ENCODE measurements at regions of chr10 and their contacts with region 1.

Region 1: DNA sequence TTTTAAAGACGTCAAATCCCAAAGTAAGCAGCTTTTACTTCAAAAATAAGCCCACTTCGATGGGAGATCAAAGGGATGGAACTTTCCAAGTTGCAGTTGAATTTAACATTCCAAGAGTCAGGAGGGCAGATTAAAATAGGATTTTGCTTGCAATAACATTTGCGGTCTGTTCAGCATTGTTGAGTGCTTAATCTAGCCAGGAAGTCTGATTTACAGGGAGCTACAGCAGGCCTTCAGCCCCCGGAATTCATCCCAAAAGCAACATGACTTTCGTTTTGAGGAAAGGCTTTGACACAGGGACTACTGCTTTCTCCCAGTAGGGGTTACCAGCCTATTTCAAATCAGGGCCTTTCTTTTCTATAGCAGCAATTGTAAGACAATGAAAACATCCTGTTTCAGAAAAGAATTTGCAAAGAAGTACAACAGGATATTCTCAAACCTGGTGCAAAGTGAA is 279.6 kb upstream of the PITRM1 start:
- DNase-seq: no peak
- ATAC-seq: peak; percentile 81
- H3K4me3 ChIP-seq: no peak overlapping the region
- H3K27ac ChIP-seq: peak overlapping the region; percentile 59 to 73
- H3K4me1 ChIP-seq: peaks cover 0 to 4% of the 10 kb centered on the region in 2 donors
- H3K27me3 ChIP-seq: no peaks in the 10 kb centered on the region

Region 2: GRCh38 chr10:3248888-3249758 is 203.1 kb before region 1 on chr10:
- intact Hi-C with region 1: loop called in 1 of 2 experiments (anchors 10 kb)
- DNase-seq: no peak
- ATAC-seq: peak; percentile 82
- H3K4me3 ChIP-seq: no peak overlapping the region
- H3K27ac ChIP-seq: peak overlapping the region; percentile 60 to 80
- H3K4me1 ChIP-seq: no peaks in the 10 kb centered on the region
- H3K27me3 ChIP-seq: no peaks in the 10 kb centered on the region